Activated B cell treated with CpG ODN at 0.5 μM for 24 hours (primary cell): ENCODE measurements at regions of chr17 and their contacts with region 1.

Region 1: DNA sequence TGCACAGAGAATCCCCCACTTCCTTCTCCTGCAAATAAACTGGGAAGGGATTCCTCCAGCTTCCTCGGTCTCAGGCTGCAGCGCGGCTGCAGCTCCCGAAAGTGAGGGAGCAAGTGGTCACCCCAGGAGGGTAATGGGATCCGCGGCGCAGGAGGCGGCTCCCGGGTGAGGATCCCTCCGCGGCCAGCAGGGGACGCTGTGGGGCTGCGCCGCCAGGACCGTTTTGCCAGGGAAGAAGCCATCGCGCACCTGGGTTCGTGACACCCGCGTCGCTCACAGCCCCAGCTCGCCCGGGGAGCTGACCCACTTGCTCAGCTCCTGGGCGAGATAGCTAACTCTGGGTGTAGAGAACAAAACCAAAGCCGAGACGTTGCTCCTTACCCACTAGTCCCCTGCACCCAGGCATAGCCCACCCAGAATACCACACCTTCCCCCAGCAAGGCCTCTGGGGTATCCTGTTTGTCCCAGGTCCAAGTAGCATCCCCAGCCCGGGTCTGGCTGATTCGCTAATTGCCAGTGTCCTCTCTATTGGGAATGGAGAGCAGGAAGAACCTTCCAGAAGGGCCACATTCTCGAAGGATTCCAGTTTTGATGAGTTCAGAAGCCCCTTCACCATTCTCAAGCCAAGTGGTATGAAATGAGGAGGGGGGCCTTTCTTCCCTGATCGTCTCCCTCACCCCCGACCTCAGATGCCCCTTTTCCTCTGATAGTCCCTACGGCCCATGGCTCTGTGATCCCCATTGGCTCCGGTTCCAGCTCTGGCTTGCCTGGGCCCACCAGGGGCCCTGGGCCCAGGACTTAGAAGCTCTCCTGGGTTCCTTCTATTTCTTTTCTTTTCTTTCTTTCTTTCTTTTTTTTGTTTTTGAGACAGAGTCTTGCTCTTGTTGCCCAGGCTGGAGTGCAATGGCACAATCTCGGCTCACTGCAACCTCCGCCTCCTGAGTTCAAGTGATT is 14.1 kb downstream of the CYGB start:
- DNase-seq: peak; percentile 82
- ATAC-seq: peak; percentile 45
- H3K4me3 Mint-ChIP-seq: peak overlapping the region; percentile 44
- H3K27ac Mint-ChIP-seq: peak overlapping the region; percentile 41
- H3K4me1 Mint-ChIP-seq: peaks cover 29% of the 10 kb centered on the region
- H3K27me3 Mint-ChIP-seq: peaks cover 3% of the 10 kb centered on the region
- CTCF ChIP-seq: peak; percentile 91

Region 2: DNA sequence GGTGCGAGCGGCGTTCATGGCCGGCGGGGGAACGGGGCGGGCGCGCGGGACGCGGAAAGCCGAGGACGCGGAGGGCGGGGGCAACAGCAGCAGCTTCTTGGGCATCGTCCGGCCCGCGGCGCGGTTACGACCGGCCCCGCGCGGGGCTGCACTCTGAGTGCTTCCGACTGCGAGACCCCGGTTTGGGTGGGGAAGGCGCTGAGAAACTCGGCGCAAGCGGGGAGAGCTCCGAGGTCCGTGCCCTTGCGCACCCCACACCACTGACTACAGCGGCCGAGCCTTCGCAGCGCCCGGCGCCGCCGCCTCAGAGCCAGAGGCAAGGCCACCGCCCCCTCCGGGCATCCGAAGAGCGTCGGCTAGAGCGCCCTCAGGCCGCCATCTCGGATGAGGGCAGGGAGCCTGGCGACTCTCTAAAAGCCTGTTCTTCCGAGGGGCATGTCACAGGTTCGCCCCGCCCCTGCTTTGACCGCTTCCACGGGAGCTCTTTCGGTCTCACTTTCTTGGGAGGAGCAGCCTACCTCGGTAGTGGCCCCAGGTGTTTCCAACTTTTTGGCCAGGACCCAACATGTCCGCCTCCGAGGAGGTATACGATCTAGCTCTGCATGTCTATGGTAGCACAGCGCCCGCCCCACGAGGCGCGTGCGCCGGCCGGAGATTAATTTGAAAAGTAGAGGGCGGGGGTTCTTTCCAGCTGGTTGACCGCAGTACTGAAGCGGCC is 169.6 kb before region 1 on chr17 and contains the start of gene PRPSAP1:
- CTCF ChIA-PET with region 1: no interaction called
- POLR2A ChIA-PET with region 1: no interaction called
- intact Hi-C with region 1: no loop called
- DNase-seq: peak; percentile 83
- ATAC-seq: peak; percentile 93
- H3K4me3 Mint-ChIP-seq: peak within 1 kb of the TSS; percentile 94
- H3K27ac Mint-ChIP-seq: peak within 1 kb of the TSS; percentile 98
- H3K4me1 Mint-ChIP-seq: peaks cover 23% of the 10 kb centered on the region
- H3K27me3 Mint-ChIP-seq: no peaks in the 10 kb centered on the region
- CTCF ChIP-seq: no peak
- total RNA-seq, gene PRPSAP1: 26.7 and 27.1 TPM in 2 replicates

Region 3: GRCh38 chr17:76481071-76481655 is 42.2 kb before region 1 on chr17:
- CTCF ChIA-PET with region 1: interaction called, 4 read pairs
- POLR2A ChIA-PET with region 1: interaction called, 14 read pairs
- intact Hi-C with region 1: loop called (anchors 1 kb)
- DNase-seq: peak; percentile 61
- ATAC-seq: peak; percentile 64
- H3K4me3 Mint-ChIP-seq: peak overlapping the region; percentile 81
- H3K27ac Mint-ChIP-seq: peak overlapping the region; percentile 92
- H3K4me1 Mint-ChIP-seq: peaks cover 79% of the 10 kb centered on the region
- H3K27me3 Mint-ChIP-seq: no peaks in the 10 kb centered on the region
- CTCF ChIP-seq: no peak

Region 4: GRCh38 chr17:76540381-76541300 is 17.3 kb after region 1 on chr17:
- CTCF ChIA-PET with region 1: interaction called, 88 read pairs
- POLR2A ChIA-PET with region 1: interaction called, 51 read pairs
- intact Hi-C with region 1: no loop called
- DNase-seq: no peak
- ATAC-seq: peak; percentile 63
- H3K4me3 Mint-ChIP-seq: no peak overlapping the region
- H3K27ac Mint-ChIP-seq: no peak overlapping the region
- H3K4me1 Mint-ChIP-seq: peaks cover 21% of the 10 kb centered on the region
- H3K27me3 Mint-ChIP-seq: peaks cover 21% of the 10 kb centered on the region
- CTCF ChIP-seq: no peak

Region 5: GRCh38 chr17:76547184-76547641 is 23.9 kb after region 1 on chr17:
- CTCF ChIA-PET with region 1: interaction called, 88 read pairs
- POLR2A ChIA-PET with region 1: interaction called, 51 read pairs
- intact Hi-C with region 1: loop called (anchors 1 kb)
- DNase-seq: no peak
- ATAC-seq: peak; percentile 94
- H3K4me3 Mint-ChIP-seq: no peak overlapping the region
- H3K27ac Mint-ChIP-seq: no peak overlapping the region
- H3K4me1 Mint-ChIP-seq: peaks cover 5% of the 10 kb centered on the region
- H3K27me3 Mint-ChIP-seq: peaks cover 8% of the 10 kb centered on the region
- CTCF ChIP-seq: no peak

Region 6: DNA sequence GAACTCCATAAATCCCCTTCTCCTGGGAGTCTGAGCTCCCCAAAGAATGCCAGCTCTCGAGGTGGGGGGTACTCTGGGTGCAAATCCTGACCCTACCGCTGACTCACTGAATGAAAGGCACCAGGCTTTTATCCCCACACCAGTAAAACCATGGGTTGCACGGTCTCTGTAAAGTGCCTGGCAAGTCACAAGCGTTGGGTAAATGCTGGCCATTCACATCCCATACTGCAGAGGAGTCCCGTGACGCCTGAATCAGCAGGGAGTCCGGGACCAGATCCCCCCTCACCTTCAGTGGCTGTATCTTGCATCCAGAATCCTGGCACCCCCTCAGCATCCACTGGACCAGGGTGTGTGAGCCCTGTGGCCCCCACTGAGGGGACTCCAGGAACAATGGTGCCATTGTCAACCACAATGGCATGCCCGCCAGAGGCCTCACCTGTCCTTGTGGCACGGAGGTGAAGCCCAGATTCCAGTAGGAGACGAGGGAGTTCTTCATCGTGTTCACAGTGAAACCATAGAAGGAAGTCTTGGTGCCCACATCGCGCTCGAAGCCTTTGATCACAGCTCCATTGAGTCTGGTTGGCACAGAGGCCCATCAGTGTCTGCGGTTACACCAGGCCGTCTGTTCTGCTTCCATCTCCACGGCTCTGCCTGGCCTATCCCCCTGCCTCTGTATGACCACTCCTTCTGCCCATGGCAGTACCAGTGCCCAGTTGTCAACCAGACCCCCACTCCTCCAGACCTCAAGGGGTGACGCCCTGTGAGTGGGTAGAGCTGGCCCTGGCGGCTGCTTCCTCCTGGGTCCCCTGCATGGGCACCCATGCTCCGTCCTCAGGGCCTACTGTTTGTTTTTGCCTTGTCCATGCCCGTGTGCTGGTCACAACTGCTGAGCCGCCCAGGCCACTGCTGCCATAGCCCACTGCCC is 49.1 kb after region 1 on chr17:
- CTCF ChIA-PET with region 1: no interaction called
- POLR2A ChIA-PET with region 1: no interaction called
- intact Hi-C with region 1: no loop called
- DNase-seq: no peak
- ATAC-seq: no peak
- H3K4me3 Mint-ChIP-seq: no peak overlapping the region
- H3K27ac Mint-ChIP-seq: no peak overlapping the region
- H3K4me1 Mint-ChIP-seq: peaks cover 14% of the 10 kb centered on the region
- H3K27me3 Mint-ChIP-seq: no peaks in the 10 kb centered on the region
- CTCF ChIP-seq: no peak

Region 7: GRCh38 chr17:76623271-76624146 is 100.1 kb after region 1 on chr17:
- CTCF ChIA-PET with region 1: interaction called, 52 read pairs
- POLR2A ChIA-PET with region 1: interaction called, 3 read pairs
- intact Hi-C with region 1: loop called (anchors 1 kb)
- DNase-seq: peak; percentile 68
- ATAC-seq: peak; percentile 98
- H3K4me3 Mint-ChIP-seq: no peak overlapping the region
- H3K27ac Mint-ChIP-seq: no peak overlapping the region
- H3K4me1 Mint-ChIP-seq: no peaks in the 10 kb centered on the region
- H3K27me3 Mint-ChIP-seq: peaks cover 15% of the 10 kb centered on the region
- CTCF ChIP-seq: peak; percentile 78

Region 8: DNA sequence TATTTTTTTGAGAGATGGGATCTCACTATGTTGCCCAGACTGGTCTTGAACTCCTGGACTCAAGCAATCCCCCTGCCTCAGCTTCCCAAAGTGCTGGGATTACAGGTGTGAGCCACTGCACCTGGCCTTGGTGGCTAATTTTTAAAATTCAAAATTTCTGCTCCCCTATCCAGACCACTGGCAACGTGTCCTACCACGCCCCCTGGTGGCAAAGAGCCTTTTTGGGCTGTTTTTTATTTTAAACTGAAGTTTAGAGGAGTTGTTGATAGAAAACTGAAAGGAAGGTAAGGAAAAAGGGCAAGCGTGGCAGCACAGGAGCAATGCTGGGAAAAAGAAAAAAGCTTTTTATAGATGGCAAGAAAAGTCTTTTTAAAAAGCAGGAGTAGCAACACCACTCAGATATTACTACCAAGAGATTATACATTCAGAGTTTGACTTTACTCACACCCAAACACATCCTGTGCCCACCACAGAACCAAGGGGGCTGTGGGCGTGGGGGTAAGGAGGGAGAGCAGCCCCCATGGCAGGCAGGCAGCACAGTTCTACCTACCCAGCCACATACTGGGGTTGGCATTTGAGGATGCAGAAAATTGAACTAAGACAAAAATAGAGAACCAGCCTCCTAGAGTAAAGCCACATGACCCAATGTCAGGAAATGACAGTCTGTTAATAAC is 191.6 kb after region 1 on chr17:
- CTCF ChIA-PET with region 1: interaction called, 7 read pairs
- POLR2A ChIA-PET with region 1: no interaction called
- intact Hi-C with region 1: loop called (anchors 1 kb)
- DNase-seq: peak; percentile 56
- ATAC-seq: peak; percentile 29
- H3K4me3 Mint-ChIP-seq: peak overlapping the region; percentile 39
- H3K27ac Mint-ChIP-seq: peak overlapping the region; percentile 78
- H3K4me1 Mint-ChIP-seq: peaks cover 27% of the 10 kb centered on the region
- H3K27me3 Mint-ChIP-seq: no peaks in the 10 kb centered on the region
- CTCF ChIP-seq: peak; percentile 76

Region 9: DNA sequence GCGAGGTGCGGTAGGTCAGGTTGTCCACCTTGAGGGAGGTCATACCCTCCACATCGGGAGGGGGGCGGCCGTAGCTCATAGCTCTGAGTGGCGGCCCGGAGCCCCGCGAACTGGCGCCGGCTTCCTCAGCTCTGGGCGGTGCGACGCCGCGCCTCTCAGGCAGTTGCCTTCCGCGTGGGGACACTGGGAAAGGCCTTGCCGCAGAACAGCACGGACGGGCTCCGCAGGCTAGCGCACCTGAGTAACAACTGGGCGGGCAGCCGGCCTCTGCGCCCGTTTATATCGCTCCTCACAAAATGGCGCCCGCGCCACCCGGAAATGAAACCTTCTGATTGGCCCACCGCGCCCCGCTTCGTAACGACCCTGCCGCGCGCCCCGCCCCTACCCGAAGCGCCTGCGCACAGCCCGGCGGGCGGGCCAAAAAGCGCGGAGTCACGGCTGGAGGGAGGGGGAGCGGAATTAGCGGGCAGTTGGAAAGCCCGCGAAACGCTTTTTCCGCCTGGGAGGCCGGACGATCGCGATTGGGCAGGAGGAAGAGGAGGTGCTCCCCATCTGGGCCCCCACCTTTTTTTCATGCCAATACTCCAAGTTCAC is 213.8 kb after region 1 on chr17 and contains the start of gene SRSF2:
- CTCF ChIA-PET with region 1: no interaction called
- POLR2A ChIA-PET with region 1: interaction called, 13 read pairs
- intact Hi-C with region 1: no loop called
- DNase-seq: peak; percentile 99
- ATAC-seq: peak; percentile 74
- H3K4me3 Mint-ChIP-seq: peak within 1 kb of the TSS; percentile 97
- H3K27ac Mint-ChIP-seq: peak within 1 kb of the TSS; percentile 96
- H3K4me1 Mint-ChIP-seq: peaks cover 50% of the 10 kb centered on the region
- H3K27me3 Mint-ChIP-seq: no peaks in the 10 kb centered on the region
- CTCF ChIP-seq: no peak
- total RNA-seq, gene SRSF2: 335 and 367 TPM in 2 replicates